ENCODE measurements at regions of chr16 and their contacts with region 1.

Region 1: GRCh38 chr16:58487566-58488351 is 12.2 kb upstream of the NDRG4 start:
- DNase-seq: peak; percentile 71
- ATAC-seq: peak; percentile 95
- H3K4me3 ChIP-seq: no peak overlapping the region
- H3K27ac ChIP-seq: no peak overlapping the region
- H3K4me1 ChIP-seq: no peaks in the 10 kb centered on the region
- H3K27me3 ChIP-seq: peaks cover 2 to 14% of the 10 kb centered on the region in 2 experiments; a peak in 3 of 5 replicates
- CTCF ChIP-seq: peak; percentile 100
- EP300 ChIP-seq: no peak
- POLR2A ChIP-seq: no peak
- RAD21 ChIP-seq: peak; percentile 99

Region 2: DNA sequence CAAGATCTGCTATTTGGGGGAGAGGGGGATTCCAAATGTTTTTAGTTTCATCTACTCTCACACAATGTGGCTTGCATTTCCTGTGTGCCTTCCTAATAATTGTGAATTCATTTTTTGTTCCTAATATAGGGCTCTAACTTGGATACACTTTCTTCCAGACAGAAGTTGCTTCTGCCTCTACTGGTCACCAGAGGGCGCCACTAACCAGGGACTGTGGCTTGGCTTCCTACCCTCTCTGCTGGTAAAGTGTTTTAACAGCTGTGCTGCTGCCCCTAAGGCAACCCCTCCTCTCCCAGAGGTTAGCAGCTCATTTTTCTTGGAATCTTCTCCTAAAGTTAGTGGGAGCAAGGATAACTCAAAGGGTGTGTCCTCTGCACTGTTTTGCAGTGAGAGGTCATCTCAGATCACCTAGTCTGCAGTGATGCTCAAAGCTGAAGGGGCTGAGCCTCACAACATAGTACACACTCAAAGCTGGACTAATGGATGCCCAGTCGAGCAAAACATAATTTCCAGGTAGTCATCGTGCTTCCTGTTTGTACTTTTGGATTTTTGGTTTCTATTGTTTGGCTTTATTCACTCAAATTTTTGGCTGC is 187.9 kb before region 1 on chr16:
- CTCF ChIA-PET with region 1: interaction called, 18 read pairs
- POLR2A ChIA-PET with region 1: no interaction called
- in situ Hi-C with region 1: no loop called
- intact Hi-C with region 1: loop called (anchors 1 kb)
- DNase-seq: peak; percentile 26
- ATAC-seq: peak; percentile 88
- H3K4me3 ChIP-seq: no peak overlapping the region
- H3K27ac ChIP-seq: no peak overlapping the region
- H3K4me1 ChIP-seq: no peaks in the 10 kb centered on the region
- H3K27me3 ChIP-seq: peaks cover 0 to 6% of the 10 kb centered on the region in 2 experiments; a peak in 2 of 5 replicates
- CTCF ChIP-seq: peak; percentile 73
- EP300 ChIP-seq: no peak
- POLR2A ChIP-seq: no peak
- RAD21 ChIP-seq: peak; percentile 66

Region 3: GRCh38 chr16:58435779-58436178 is 52.0 kb before region 1 on chr16:
- CTCF ChIA-PET with region 1: interaction called, 12 read pairs
- POLR2A ChIA-PET with region 1: no interaction called
- in situ Hi-C with region 1: no loop called
- intact Hi-C with region 1: loop called (anchors 1 kb)
- DNase-seq: no peak
- ATAC-seq: peak; percentile 73
- H3K4me3 ChIP-seq: no peak overlapping the region
- H3K27ac ChIP-seq: no peak overlapping the region
- H3K4me1 ChIP-seq: no peaks in the 10 kb centered on the region
- H3K27me3 ChIP-seq: peaks cover 0 to 2% of the 10 kb centered on the region in 2 experiments; a peak in 2 of 5 replicates
- CTCF ChIP-seq: peak; percentile 30
- EP300 ChIP-seq: no peak
- POLR2A ChIP-seq: no peak
- RAD21 ChIP-seq: peak; percentile 40; the same call in 1 of the 2 replicates